ENCODE measurements at regions of chr9 and their contacts with region 1.

Region 1: DNA sequence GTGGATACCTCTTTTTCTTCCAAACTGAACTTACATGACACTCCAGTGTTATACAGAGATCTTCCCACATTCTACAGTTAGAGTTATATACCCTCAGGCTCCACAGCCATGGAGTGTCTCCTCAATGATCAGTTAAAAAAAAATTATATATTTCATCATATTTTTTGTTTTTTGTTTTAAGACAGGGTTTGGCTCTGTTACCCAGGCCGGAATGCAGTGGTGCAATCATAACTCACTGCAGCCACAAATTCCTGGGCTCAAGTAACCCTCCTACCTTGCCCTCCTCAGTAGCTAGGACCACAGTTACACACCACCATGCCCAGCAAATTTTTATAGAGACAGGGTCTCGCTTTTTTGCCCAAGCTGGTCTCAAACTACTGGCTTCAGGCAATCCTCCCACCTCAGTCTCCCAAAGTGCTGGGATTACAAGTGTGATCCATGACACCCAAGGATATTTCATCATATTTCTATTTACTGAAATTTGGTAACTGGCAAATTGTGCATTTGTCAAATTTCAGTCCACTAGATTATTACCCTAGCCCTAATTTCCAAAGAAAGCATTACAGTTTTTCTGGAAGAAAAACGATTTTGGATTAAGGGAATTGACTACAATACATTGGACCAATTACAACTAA is 18.1 kb upstream of the SCAI start:
- H3K4me3 Mint-ChIP-seq: no peak overlapping the region
- H3K27ac Mint-ChIP-seq: peak overlapping the region; percentile 12
- H3K4me1 Mint-ChIP-seq: no peaks in the 10 kb centered on the region
- H3K27me3 Mint-ChIP-seq: no peaks in the 10 kb centered on the region

Region 2: DNA sequence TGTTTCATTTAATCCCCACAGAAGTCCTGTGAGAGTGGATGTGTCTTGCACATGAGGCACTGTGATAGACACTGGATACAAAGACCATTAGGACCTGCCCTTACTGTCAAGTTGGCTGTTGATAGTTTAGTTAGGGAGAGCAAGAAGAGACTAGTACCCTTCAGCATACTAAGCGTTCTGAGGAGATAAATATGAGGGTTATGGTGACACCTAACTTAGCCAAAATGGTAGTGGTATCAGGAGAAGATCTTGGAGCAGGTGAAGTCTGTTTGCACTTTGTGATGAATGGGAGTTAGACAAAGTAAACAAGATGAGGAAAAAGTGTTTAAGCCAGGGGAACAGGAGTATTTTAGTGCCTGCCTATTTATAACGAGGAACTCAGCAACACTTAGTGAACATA is 147.3 kb after region 1 on chr9:
- intact Hi-C with region 1: loop called (anchors 10 kb)
- H3K4me3 Mint-ChIP-seq: no peak overlapping the region
- H3K27ac Mint-ChIP-seq: no peak overlapping the region
- H3K4me1 Mint-ChIP-seq: no peaks in the 10 kb centered on the region
- H3K27me3 Mint-ChIP-seq: no peaks in the 10 kb centered on the region

Measured in dendritic cell treated with granulocyte-macrophage colony-stimulating factor and Interleukin-4, amounts not matched to agents 40 ng/mL and 50 ng/mL, for 4 days (primary cell).